AG04450 (cell line): ENCODE measurements at regions of chr3 and their contacts with region 1.

Region 1: GRCh38 chr3:149717391-149718056 is 34.8 kb downstream of the COMMD2 start:
- DNase-seq: peak; percentile 45
- H3K4me3 ChIP-seq: no peak overlapping the region
- H3K27ac ChIP-seq: no peak overlapping the region
- H3K27me3 ChIP-seq: no peaks in the 10 kb centered on the region
- CTCF ChIP-seq: peak; percentile 80

Region 2: GRCh38 chr3:149174901-149175300 is 542.6 kb before region 1 on chr3:
- CTCF ChIA-PET with region 1: no interaction called
- POLR2A ChIA-PET with region 1: no interaction called
- DNase-seq: no peak
- H3K4me3 ChIP-seq: no peak overlapping the region
- H3K27ac ChIP-seq: no peak overlapping the region
- H3K27me3 ChIP-seq: no peaks in the 10 kb centered on the region
- CTCF ChIP-seq: no peak

Region 3: GRCh38 chr3:149494022-149494758 is 223.3 kb before region 1 on chr3:
- CTCF ChIA-PET with region 1: interaction called, 16 read pairs
- POLR2A ChIA-PET with region 1: no interaction called
- DNase-seq: no peak
- H3K4me3 ChIP-seq: no peak overlapping the region
- H3K27ac ChIP-seq: no peak overlapping the region
- H3K27me3 ChIP-seq: no peaks in the 10 kb centered on the region
- CTCF ChIP-seq: peak; percentile 92

Region 4: DNA sequence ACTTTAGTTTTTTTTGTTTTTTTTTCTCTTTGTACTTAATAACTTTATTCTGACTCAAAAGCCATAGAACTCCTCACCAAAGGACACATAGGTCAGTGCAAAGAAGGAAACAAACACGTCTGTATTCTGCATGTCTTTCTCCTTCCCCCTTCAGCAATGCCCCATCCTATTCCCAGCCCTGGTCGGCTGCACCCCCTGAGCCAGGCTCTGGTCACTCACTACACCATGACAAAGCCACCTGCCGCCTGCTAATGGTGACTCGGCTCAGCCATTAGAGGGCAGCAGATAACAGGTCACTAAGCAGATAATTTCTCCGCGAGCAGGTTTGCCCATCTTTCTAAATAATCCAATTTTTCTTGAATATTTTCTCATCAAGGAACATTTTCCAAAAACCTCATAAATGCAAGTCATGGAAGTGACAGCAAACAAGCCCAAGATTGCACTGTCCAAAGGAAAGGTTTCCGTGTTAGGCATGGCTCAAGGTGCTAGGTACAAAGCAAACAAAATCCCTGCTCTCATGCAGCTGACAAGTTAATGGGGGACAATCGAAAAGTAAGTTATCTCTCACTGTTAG is 205.2 kb before region 1 on chr3:
- CTCF ChIA-PET with region 1: interaction called, 89 read pairs
- POLR2A ChIA-PET with region 1: no interaction called
- DNase-seq: no peak
- H3K4me3 ChIP-seq: no peak overlapping the region
- H3K27ac ChIP-seq: no peak overlapping the region
- H3K27me3 ChIP-seq: no peaks in the 10 kb centered on the region
- CTCF ChIP-seq: peak; percentile 79

Region 5: DNA sequence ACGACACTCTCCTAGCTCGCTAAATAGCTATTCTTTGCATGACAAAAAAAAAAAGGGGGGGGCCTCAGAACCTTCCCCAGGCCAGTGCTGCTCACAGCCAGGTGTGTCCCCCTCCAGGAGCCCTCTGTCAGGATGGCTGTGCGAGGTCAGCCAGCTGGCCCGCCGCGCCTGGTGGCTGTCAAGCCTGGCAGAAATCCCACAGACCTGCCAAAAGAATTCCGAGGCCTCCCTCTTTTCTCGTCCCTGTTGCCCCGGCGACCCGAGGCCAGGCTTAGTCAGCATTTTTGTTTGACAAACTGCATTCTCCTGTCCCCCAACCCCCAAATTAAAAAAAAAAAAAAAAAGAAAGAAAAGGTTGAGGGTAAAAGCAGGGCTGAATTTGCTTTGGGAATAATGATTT is 181.1 kb before region 1 on chr3:
- CTCF ChIA-PET with region 1: interaction called, 63 read pairs
- POLR2A ChIA-PET with region 1: no interaction called
- DNase-seq: no peak
- H3K4me3 ChIP-seq: no peak overlapping the region
- H3K27ac ChIP-seq: no peak overlapping the region
- H3K27me3 ChIP-seq: no peaks in the 10 kb centered on the region
- CTCF ChIP-seq: no peak

Region 6: GRCh38 chr3:149657926-149658733 is 59.4 kb before region 1 on chr3 and contains the start of gene WWTR1:
- CTCF ChIA-PET with region 1: interaction called, 13 read pairs
- POLR2A ChIA-PET with region 1: interaction called, 4 read pairs
- DNase-seq: peak; percentile 92
- H3K4me3 ChIP-seq: peak within 1 kb of the TSS; percentile 94
- H3K27ac ChIP-seq: peak within 1 kb of the TSS; percentile 98
- H3K27me3 ChIP-seq: no peaks in the 10 kb centered on the region
- CTCF ChIP-seq: no peak
- polyA plus RNA-seq, gene WWTR1: 161 and 164 TPM in 2 replicates

Region 7: DNA sequence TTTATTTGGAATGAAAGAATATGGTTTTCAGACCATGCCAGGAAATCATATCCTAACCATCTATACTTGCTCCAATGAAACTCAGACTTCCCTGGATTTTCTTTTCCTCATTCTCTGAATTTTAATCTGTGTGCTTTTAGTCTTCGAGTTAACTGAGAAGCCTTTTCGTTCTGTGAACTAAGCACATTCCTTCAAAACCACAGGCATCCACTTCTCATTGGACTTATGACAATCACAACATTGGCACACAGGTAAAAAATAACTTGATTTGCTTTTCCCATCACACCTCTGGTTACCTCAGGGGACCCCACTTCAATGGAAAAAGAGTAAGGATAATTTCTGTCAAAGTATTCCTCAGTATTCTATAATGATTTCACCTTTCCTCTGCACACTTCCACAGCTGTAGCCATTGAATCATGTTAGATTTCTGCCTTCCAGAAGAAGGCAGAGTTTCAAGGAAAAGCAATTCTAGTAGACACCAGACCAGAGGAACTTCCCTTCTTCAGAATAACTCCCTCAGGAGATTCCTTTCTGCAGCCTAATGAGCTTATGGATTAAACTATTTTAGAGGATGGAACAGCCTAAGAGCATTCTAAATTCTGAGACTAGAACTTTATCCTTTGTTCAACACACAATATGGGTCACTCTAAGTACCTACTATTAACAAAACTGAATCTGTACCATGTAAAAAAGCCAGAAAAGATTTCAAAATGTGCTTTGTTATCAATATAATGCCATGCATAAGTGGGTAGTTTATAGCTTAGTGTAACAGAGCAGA is 18.8 kb after region 1 on chr3:
- CTCF ChIA-PET with region 1: interaction called, 12 read pairs
- POLR2A ChIA-PET with region 1: no interaction called
- DNase-seq: no peak
- H3K4me3 ChIP-seq: no peak overlapping the region
- H3K27ac ChIP-seq: no peak overlapping the region
- H3K27me3 ChIP-seq: no peaks in the 10 kb centered on the region
- CTCF ChIP-seq: no peak